ENCODE measurements at regions of chr17 and their contacts with region 1.

Region 1: GRCh38 chr17:79393358-79394202 is 217.3 kb downstream of the RBFOX3 start:
- DNase-seq: peak; percentile 84
- CTCF ChIP-seq: peak; percentile 94

Region 2: DNA sequence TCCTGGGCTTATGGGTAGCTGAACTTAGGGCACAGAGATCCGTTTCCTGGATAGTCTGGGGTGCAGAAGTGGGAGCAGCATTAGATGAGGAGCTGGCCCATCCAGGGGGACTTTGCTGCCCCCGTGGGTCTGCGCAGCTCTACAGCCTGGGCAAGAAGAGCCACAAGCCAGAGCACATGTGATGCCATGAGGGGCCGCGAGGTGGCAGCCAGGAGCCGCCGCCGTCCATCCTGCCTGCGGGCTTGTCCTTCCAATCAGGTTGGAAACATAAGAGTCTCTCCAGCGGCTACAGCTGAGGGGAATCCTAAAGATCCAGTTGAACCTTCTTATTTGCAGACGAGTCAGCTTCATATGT is 347.8 kb before region 1 on chr17:
- CTCF ChIA-PET with region 1: interaction called, 28 read pairs
- POLR2A ChIA-PET with region 1: no interaction called
- DNase-seq: peak; percentile 85
- CTCF ChIP-seq: peak; percentile 92

Region 3: DNA sequence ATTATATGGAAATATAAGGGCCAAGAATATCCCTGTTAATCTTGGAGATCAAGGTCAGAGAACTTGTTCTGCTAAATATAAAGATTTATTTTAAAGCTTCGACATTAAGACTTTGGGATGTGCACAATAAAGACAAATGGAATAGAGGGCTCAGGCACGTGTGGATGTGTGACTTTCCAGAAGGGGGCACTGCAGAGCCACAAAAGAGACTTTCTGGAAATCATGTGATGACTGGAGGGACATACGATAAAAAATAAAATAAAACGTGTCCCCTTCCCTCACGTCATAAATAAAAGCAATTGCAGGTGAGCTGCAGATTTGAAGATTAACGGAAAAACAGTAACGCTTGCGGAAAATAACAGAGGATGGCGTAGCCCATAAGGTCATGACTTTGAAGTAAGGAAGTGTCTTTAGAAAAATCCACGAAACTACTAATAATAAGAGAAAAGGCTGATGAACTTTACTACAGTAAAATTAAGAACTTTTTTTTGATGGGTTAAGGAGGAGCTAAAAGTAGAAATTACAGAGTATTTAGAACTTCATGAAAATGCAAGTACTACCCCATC is 328.4 kb before region 1 on chr17:
- CTCF ChIA-PET with region 1: interaction called, 33 read pairs
- POLR2A ChIA-PET with region 1: no interaction called
- DNase-seq: peak; percentile 33
- CTCF ChIP-seq: peak; percentile 22

Region 4: GRCh38 chr17:79082311-79083190 is 311.0 kb before region 1 on chr17:
- CTCF ChIA-PET with region 1: interaction called, 204 read pairs
- POLR2A ChIA-PET with region 1: no interaction called
- DNase-seq: peak; percentile 78
- CTCF ChIP-seq: peak; percentile 84

Region 5: GRCh38 chr17:79188048-79188447 is 205.5 kb before region 1 on chr17:
- CTCF ChIA-PET with region 1: interaction called, 132 read pairs
- POLR2A ChIA-PET with region 1: no interaction called
- DNase-seq: peak; percentile 71
- CTCF ChIP-seq: peak; percentile 58

Region 6: GRCh38 chr17:79707931-79708891 is 314.6 kb after region 1 on chr17:
- CTCF ChIA-PET with region 1: interaction called, 13 read pairs
- POLR2A ChIA-PET with region 1: no interaction called
- DNase-seq: peak; percentile 76
- CTCF ChIP-seq: peak; percentile 81